Sigmoid colon (tissue), 7 donors: ENCODE measurements at regions of chr18 and their contacts with region 1.

Region 1: DNA sequence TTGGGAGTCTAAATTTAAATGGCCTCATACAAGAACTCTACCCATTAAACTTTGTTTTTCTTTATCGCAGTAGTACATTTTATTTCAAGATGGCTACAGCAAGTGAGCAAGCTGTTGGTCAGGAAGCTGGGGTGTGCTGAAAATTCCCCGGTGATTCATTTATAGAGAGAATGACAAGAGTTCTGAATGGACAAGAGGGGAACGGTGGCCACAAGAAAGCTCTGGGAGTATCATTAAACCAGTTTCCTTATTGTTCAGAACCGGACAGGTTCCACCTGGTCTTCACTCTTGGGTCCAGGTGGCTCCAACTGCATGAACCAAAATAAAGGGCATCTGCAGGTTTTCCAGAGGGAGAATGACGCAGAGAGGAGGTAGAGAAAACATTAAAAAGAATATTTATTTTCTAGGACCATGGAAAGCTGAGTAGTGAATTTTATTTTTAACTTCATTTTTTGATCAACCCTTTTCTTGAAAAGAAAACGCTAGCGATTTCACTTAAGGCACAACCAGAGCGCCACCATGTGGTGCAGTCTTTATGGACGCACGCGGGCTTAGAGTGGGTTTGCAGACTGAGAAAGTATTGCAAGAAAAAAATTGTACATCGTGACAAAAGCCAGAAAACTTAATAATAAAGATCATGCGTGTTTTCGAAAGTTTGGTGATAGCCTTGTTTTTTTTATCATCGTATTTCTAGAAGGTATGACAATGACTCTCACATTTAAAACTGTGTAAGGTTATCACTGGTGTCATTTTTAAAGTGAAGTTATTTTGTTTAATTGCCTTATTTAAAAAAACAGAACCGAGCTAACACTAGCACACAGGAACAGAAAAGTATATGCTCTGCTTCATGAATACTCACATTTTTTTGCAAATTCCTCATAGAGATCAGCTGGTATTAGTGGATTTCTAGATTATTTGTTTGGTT is 97.9 kb upstream of the NOL4 start:
- DNase-seq: no peak
- H3K4me3 ChIP-seq: no peak overlapping the region
- H3K27ac ChIP-seq: no peak overlapping the region
- H3K4me1 ChIP-seq: no peaks in the 10 kb centered on the region
- H3K27me3 ChIP-seq: no peaks in the 10 kb centered on the region
- CTCF ChIP-seq: peak in 3 of 4 experiments; percentile 32 to 52 (median 44)
- EP300 ChIP-seq: no peak
- POLR2A ChIP-seq: no peak

Region 2: DNA sequence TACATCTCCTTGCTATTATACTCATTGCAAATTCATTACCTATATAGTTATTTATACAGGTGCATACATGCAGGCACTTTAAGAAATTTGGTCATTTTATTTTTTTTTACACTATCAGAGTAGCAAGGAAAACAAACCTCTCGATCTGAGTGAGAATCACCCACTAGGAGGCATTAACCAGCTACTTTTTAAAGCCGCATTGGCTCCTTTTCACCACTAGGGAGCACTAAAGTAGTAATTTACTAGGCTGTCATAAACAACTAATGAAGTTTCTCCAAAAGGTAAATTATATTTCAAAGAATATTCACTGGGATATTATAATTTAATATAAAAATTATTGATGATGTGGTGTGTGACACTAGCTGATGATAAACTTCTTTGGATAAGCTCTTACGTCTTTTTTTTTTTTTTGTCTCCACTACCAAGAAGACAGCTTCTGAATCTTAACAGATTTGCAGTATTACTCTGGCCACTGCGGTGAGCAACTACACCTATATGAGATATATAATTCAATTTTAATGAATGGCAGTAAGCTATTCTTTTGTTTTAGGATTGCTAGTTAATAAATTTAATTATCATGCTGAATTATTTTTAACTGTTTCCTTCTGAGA is 199.8 kb before region 1 on chr18:
- intact Hi-C with region 1: loop called (anchors 10 kb)
- DNase-seq: no peak
- H3K4me3 ChIP-seq: no peak overlapping the region
- H3K27ac ChIP-seq: no peak overlapping the region
- H3K4me1 ChIP-seq: no peaks in the 10 kb centered on the region
- H3K27me3 ChIP-seq: no peaks in the 10 kb centered on the region
- CTCF ChIP-seq: peak; percentile 21 to 81 (median 66)
- EP300 ChIP-seq: no peak
- POLR2A ChIP-seq: no peak

Region 3: DNA sequence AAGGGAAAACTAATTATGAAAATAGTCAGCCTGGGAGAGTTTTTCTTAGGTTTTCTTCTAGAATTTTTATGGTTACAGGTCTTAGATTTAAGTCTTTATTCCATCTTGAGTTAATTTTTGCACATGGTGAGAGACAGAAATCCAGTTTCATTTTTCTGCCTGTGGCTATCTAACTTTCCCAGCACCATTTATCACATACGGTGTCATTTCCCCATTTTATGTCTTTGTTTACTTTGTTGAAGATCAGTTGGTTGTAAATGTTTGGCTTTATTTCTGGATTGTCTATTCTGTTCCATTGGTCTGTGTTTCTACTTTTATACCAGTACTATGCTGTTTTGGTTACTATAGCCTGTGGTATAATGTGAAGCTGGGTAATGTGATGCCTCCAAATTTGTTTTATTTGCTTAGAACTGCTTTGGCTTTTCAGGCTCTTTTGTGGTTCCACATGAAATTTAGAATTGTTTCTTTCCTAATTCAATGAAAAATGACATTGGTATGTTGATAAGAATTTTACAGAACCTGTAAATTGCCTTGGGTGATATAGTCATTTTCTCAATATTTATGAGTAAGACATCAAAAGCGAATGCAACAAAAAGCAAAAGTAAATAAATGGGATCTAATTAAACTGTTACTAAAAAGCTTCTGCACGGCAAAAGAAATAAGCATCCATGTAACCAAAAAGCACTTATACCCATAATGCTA is 48.2 kb after region 1 on chr18:
- intact Hi-C with region 1: no loop called
- DNase-seq: no peak
- H3K4me3 ChIP-seq: no peak overlapping the region
- H3K27ac ChIP-seq: no peak overlapping the region
- H3K4me1 ChIP-seq: no peaks in the 10 kb centered on the region
- H3K27me3 ChIP-seq: no peaks in the 10 kb centered on the region
- CTCF ChIP-seq: no peak
- EP300 ChIP-seq: no peak
- POLR2A ChIP-seq: no peak

Region 4: GRCh38 chr18:34397286-34397896 is 74.8 kb after region 1 on chr18:
- intact Hi-C with region 1: no loop called
- DNase-seq: no peak
- H3K4me3 ChIP-seq: no peak overlapping the region
- H3K27ac ChIP-seq: no peak overlapping the region
- H3K4me1 ChIP-seq: no peaks in the 10 kb centered on the region
- H3K27me3 ChIP-seq: no peaks in the 10 kb centered on the region
- CTCF ChIP-seq: no peak
- EP300 ChIP-seq: no peak
- POLR2A ChIP-seq: no peak

Region 5: GRCh38 chr18:34576622-34577021 is 254.0 kb after region 1 on chr18:
- intact Hi-C with region 1: no loop called
- DNase-seq: no peak
- H3K4me3 ChIP-seq: no peak overlapping the region
- H3K27ac ChIP-seq: no peak overlapping the region
- H3K4me1 ChIP-seq: no peaks in the 10 kb centered on the region
- H3K27me3 ChIP-seq: no peaks in the 10 kb centered on the region
- CTCF ChIP-seq: no peak
- EP300 ChIP-seq: no peak
- POLR2A ChIP-seq: no peak